Activated B cell treated with CpG ODN at 0.5 μM for 24 hours (primary cell): ENCODE measurements at regions of chr1 and their contacts with region 1.

Region 1: GRCh38 chr1:212558693-212559480 is 49.7 kb upstream of the ATF3 start:
- DNase-seq: peak; percentile 93
- ATAC-seq: peak; percentile 88
- H3K4me3 Mint-ChIP-seq: peak overlapping the region; percentile 88
- H3K27ac Mint-ChIP-seq: peak overlapping the region; percentile 93
- H3K4me1 Mint-ChIP-seq: peaks cover 13% of the 10 kb centered on the region
- H3K27me3 Mint-ChIP-seq: peaks cover 2% of the 10 kb centered on the region
- CTCF ChIP-seq: no peak

Region 2: GRCh38 chr1:212414328-212415106 is 144.4 kb before region 1 on chr1 and contains the start of gene PACC1:
- CTCF ChIA-PET with region 1: no interaction called
- POLR2A ChIA-PET with region 1: no interaction called
- intact Hi-C with region 1: loop called (anchors 5 kb)
- DNase-seq: peak; percentile 93
- ATAC-seq: peak; percentile 98
- H3K4me3 Mint-ChIP-seq: peak within 1 kb of the TSS; percentile 100
- H3K27ac Mint-ChIP-seq: peak within 1 kb of the TSS; percentile 96
- H3K4me1 Mint-ChIP-seq: peaks cover 43% of the 10 kb centered on the region
- H3K27me3 Mint-ChIP-seq: no peaks in the 10 kb centered on the region
- CTCF ChIP-seq: no peak
- total RNA-seq, gene PACC1: 15.2 and 20.0 TPM in 2 replicates

Region 3: DNA sequence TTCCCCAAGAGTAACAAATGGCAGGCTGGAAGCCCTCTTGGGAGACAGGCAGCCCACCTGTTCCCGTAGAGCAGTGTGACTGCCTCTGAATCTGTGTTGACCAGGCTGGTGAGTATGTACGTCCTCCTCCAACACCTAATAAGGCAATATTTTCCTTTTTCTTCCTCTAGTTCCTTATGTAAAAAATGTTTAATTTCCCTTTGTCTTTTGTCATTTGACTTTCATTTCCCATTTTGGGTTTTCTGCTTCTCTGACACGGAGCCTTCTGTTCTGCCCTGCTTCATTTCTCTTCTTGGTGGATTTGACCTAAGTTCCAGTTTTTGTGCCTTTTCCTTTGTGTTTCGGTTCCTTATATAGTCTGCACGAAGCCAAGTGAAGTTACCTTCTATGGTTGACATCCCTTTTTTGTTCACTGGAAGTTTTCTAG is 16.1 kb before region 1 on chr1:
- CTCF ChIA-PET with region 1: no interaction called
- POLR2A ChIA-PET with region 1: interaction called, 17 read pairs
- intact Hi-C with region 1: loop called (anchors 2 kb)
- DNase-seq: no peak
- ATAC-seq: peak; percentile 89
- H3K4me3 Mint-ChIP-seq: peak overlapping the region; percentile 8
- H3K27ac Mint-ChIP-seq: peak overlapping the region; percentile 15
- H3K4me1 Mint-ChIP-seq: peaks cover 18% of the 10 kb centered on the region
- H3K27me3 Mint-ChIP-seq: no peaks in the 10 kb centered on the region
- CTCF ChIP-seq: no peak

Region 4: DNA sequence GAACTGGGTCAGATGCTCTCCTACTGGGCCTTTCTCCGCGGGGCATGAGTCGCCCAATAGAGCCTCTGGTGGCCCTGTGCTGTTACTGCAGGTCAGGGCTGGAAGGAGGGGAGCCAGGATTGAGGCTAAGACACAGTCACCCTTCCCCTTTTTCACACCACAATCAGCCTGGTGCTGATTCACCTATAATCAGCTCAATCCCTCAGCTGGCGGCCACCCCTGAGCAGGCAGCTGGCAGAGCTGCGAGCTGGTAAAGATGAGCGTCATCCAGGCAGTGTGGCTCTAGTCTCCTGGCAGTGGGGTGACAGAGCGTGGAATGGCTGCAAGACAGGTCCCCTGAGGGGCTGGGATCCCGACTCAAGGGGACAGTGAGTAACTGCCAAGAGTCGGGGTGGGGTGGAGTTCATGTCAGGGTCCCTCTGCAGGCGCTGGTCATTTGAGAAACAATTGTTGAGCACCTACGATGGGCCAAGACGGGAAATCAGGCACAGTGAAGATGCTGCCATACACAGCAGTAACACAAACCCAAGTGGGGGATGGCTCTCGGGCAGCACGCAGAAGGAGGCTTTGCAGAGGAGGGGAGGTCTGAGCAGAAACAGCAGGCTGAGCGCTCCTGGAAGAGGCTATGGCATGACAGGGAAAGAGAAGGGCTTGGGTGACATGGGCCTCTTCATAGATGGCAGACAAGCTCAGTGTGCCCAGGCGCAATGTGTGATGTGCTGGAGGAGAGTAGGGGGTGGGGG is 71.4 kb after region 1 on chr1:
- CTCF ChIA-PET with region 1: no interaction called
- POLR2A ChIA-PET with region 1: no interaction called
- intact Hi-C with region 1: loop called (anchors 1 kb)
- DNase-seq: peak; percentile 58
- ATAC-seq: peak; percentile 98
- H3K4me3 Mint-ChIP-seq: no peak overlapping the region
- H3K27ac Mint-ChIP-seq: no peak overlapping the region
- H3K4me1 Mint-ChIP-seq: peaks cover 19% of the 10 kb centered on the region
- H3K27me3 Mint-ChIP-seq: peaks cover 12% of the 10 kb centered on the region
- CTCF ChIP-seq: peak; percentile 76

Region 5: DNA sequence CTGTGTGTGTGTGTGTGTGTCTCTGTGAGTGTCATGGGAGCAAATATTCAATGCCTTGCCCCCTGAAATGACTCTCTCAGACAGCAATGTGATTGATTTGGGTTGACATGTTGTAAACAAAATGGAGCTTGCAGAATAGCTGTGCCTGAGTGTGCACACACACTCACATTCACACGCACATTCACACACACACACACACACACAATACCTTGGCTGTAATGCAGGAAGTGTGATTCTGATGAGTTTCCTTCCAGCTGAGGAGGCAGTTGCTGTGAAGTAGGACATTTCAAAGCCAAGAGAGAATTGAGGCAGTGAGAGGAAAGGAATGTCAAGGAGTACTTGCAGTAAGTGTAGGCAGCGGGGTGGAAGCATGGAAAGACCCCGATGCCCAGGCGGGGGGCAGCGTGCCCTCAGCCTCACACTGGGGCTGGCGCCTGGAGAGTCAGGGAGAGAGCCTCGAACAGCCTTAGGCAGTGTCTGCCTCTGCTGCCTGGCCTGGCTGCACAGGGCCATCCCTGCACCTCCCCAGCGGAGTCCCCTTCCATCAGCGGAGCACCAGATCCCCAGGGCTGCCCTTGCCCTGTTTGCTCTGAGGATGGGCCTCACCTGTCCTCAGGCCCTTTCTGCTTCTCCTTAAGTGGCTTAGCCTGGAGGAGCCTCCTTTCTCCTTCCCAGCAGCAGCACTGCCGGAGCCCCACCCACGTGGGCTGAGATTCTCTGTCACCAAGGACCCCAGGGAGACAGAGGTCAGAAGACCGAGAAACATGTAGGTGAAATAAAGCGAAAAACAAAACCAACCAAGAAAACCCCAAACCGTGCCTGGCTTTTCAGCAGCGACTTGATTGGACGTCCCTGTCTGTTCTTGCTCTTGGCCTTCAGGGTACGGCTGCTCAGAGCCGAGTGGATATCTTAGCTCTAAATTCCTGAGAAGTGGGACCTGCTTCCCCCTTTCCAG is 400.7 kb after region 1 on chr1:
- CTCF ChIA-PET with region 1: no interaction called
- POLR2A ChIA-PET with region 1: no interaction called
- intact Hi-C with region 1: no loop called
- DNase-seq: no peak
- ATAC-seq: no peak
- H3K4me3 Mint-ChIP-seq: no peak overlapping the region
- H3K27ac Mint-ChIP-seq: no peak overlapping the region
- H3K4me1 Mint-ChIP-seq: peaks cover 3% of the 10 kb centered on the region
- H3K27me3 Mint-ChIP-seq: peaks cover 7% of the 10 kb centered on the region
- CTCF ChIP-seq: no peak